A673 (cell line): ENCODE measurements at regions of chr1 and their contacts with region 1.

Region 1: GRCh38 chr1:40612345-40612831 is 53.1 kb downstream of the RIMS3 start:
- DNase-seq: peak; percentile 83
- H3K4me3 ChIP-seq: no peak overlapping the region
- H3K27ac ChIP-seq: no peak overlapping the region
- H3K4me1 ChIP-seq: no peaks in the 10 kb centered on the region
- H3K27me3 ChIP-seq: no peaks in the 10 kb centered on the region
- CTCF ChIP-seq: peak; percentile 92

Region 2: DNA sequence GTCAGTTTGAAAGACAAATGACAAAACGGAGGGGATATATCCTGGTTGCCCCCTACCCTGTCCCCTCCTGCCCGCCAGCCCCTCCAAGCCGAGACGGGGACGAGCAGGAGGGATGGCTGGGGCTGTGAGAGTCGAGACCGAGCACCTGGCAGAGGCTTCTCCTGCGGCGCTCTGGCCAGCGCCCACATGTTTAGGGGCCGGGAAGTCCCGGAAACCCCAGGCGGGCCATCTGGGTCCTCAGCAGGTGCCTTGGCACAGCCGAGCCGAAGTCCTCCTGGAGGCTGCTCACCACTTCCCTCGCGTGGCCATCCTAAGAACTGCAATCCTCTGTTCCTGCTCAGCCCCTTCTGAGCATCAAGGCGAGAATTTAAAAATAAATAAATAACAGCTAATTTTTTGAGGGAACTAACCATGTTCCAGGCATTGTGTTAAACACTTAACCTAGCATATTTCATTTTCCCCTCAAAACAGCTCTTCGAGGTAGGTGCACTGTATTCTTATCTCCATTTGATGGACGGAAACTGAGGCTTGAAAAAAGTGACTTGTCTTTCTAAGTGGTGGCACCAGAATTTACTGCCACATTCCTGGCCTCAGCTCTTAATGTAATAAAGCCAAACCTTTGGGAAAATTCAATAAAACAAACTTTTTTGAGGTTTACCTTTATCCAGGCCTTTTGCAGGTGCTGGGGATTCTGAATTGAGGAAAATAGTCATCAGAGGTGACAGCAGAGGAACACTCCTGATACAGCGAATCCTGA is 56.6 kb after region 1 on chr1:
- CTCF ChIA-PET with region 1: interaction called, 4 read pairs
- POLR2A ChIA-PET with region 1: no interaction called
- intact Hi-C with region 1: loop called (anchors 1 kb)
- DNase-seq: peak; percentile 85
- H3K4me3 ChIP-seq: peak overlapping the region; percentile 34
- H3K27ac ChIP-seq: no peak overlapping the region
- H3K4me1 ChIP-seq: peaks cover 20% of the 10 kb centered on the region
- H3K27me3 ChIP-seq: no peaks in the 10 kb centered on the region
- CTCF ChIP-seq: peak; percentile 92

Region 3: GRCh38 chr1:40849801-40850592 is 237.6 kb after region 1 on chr1:
- CTCF ChIA-PET with region 1: no interaction called
- POLR2A ChIA-PET with region 1: no interaction called
- intact Hi-C with region 1: loop called (anchors 1 kb)
- DNase-seq: peak; percentile 73
- H3K4me3 ChIP-seq: no peak overlapping the region
- H3K27ac ChIP-seq: no peak overlapping the region
- H3K4me1 ChIP-seq: no peaks in the 10 kb centered on the region
- H3K27me3 ChIP-seq: no peaks in the 10 kb centered on the region
- CTCF ChIP-seq: peak; percentile 89

Region 4: DNA sequence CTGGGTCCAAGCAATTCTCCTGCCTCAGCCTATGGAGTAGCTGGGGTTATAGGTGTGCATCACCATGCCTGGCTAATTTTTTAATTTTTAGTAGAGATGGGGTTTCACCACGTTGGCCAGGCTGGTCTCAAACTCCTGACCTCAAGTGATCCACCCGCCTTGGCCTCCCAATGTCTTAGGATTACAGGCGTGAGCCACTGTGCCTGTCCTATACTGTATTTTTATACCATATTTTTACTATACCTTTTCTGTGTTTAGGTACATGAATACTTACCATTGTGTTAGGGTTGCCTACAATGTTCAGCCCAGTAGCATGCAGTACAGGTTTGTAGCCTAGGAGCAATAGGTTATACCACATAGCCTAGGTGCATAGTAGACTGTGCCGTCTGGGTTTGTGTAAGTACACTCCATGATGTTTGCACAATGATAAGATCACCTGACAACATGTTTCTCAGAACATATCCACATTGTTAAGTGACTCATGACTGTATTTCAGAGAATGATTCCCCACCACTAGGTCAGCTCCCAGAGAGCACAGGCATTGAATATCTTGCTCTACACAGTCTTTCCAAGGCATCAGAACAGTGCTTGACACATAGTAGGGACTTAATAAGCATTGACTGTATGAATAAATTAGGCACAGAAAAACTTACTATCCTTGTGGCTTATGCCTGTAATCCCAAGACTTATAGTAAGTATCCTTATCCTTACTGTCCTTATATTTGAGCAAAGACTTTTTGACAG is 255.8 kb after region 1 on chr1:
- CTCF ChIA-PET with region 1: no interaction called
- POLR2A ChIA-PET with region 1: no interaction called
- intact Hi-C with region 1: no loop called
- DNase-seq: no peak
- H3K4me3 ChIP-seq: no peak overlapping the region
- H3K27ac ChIP-seq: no peak overlapping the region
- H3K4me1 ChIP-seq: no peaks in the 10 kb centered on the region
- H3K27me3 ChIP-seq: no peaks in the 10 kb centered on the region
- CTCF ChIP-seq: no peak

Region 5: GRCh38 chr1:41360993-41361753 is 748.8 kb after region 1 on chr1 and contains the start of gene FOXO6:
- CTCF ChIA-PET with region 1: no interaction called
- POLR2A ChIA-PET with region 1: no interaction called
- intact Hi-C with region 1: no loop called
- DNase-seq: peak; percentile 98
- H3K4me3 ChIP-seq: peak within 1 kb of the TSS; percentile 77
- H3K27ac ChIP-seq: peak within 1 kb of the TSS; percentile 73
- H3K4me1 ChIP-seq: peaks cover 37% of the 10 kb centered on the region
- H3K27me3 ChIP-seq: no peaks in the 10 kb centered on the region
- CTCF ChIP-seq: peak; percentile 56
- total RNA-seq, gene FOXO6: 6.1 and 7.6 TPM in 2 replicates